ENCODE measurements at regions of chrX and their contacts with region 1.

Region 1: GRCh38 chrX:96770315-96770714 is 85.7 kb downstream of the DIAPH2 start:
- DNase-seq: peak; percentile 20
- H3K4me3 ChIP-seq: no peak overlapping the region
- H3K27ac ChIP-seq: no peak overlapping the region
- H3K4me1 ChIP-seq: no peaks in the 10 kb centered on the region
- H3K27me3 ChIP-seq: no peaks in the 10 kb centered on the region
- CTCF ChIP-seq: peak; percentile 72
- EP300 ChIP-seq: no peak
- RAD21 ChIP-seq: peak; percentile 73

Region 2: GRCh38 chrX:96791559-96791958 is 21.2 kb after region 1 on chrX:
- CTCF ChIA-PET with region 1: interaction called, 10 read pairs
- POLR2A ChIA-PET with region 1: no interaction called
- DNase-seq: no peak
- H3K4me3 ChIP-seq: no peak overlapping the region
- H3K27ac ChIP-seq: no peak overlapping the region
- H3K4me1 ChIP-seq: no peaks in the 10 kb centered on the region
- H3K27me3 ChIP-seq: no peaks in the 10 kb centered on the region
- CTCF ChIP-seq: no peak
- EP300 ChIP-seq: no peak
- RAD21 ChIP-seq: no peak